Transverse colon (tissue), 4 donors: ENCODE measurements at regions of chr16 and their contacts with region 1.

Region 1: DNA sequence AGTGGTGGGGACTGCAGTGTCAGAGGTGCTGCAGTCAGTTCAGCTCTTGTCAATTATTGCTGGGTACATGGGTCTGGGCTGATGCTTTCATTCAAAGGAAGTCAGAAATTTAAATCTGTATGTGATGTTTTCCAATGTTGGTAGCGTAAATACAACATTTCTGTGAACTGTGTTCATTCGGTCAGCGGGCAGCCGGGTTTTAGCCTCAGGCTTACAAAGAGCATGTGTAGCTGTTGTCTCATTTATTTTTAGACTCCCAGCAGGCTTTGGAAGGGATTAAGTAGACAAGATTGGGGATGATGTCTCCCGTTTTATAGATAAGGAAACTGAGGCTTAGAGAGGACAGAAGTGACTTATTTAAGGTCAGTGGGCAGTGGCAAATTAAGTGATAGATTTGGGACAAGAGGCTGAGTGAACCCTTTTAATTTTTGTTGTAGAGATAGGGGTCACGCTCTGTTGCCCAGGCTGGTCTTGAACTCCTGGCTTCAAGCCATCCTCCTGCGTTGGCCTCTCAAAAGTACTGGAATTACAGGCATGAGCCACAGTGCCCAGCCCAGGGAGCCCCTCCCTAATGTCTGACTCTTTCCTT is 8.1 kb downstream of the AQP8 start:
- DNase-seq: no peak
- H3K4me3 ChIP-seq: no peak overlapping the region
- H3K27ac ChIP-seq: no peak overlapping the region
- H3K4me1 ChIP-seq: peaks cover 0 to 8% (median 2%) of the 10 kb centered on the region in 4 donors
- H3K27me3 ChIP-seq: no peaks in the 10 kb centered on the region
- CTCF ChIP-seq: no peak
- EP300 ChIP-seq: no peak
- POLR2A ChIP-seq: no peak

Region 2: DNA sequence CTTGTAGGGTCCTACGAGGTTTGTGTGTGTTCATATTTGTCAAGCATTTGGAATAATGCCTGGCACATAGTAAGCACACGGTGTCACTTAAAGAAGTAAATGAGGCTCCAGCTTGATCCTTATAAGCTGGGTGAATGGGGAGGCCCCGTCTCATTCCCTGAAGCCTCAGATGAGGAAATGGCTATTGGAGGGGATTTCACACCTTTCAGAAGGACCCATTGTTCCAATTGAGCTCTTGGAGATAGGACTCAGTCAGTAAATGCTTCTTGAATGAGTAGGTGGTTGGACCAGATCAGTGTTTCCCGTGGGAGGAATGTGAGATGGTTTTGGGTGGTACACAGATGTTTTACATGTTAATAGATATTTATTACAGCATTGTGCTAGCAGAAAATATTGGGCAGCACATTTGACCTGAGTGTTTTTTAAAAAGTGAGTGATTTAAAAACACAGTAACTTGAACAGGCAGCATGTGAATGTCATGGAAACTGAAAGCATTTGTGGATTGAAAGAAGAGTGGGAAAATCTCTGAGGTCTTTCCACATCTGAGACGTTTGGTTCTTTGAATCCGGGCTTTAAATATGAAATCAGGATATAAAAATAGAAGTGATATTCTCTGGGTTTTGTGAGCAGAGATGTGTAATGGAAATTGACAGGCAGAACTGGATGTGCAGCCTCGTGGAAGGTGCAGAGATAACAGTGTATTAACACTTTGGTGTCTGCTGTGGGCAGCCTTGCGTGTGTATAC is 173.2 kb before region 1 on chr16:
- in situ Hi-C with region 1: loop called in 2 of 4 experiments (anchors 10 to 25 kb)
- intact Hi-C with region 1: loop called (anchors 10 kb)
- DNase-seq: no peak
- H3K4me3 ChIP-seq: no peak overlapping the region
- H3K27ac ChIP-seq: peak overlapping the region; percentile 27 to 47 (median 36)
- H3K4me1 ChIP-seq: peaks cover 5 to 34% (median 19%) of the 10 kb centered on the region in 4 donors
- H3K27me3 ChIP-seq: no peaks in the 10 kb centered on the region
- CTCF ChIP-seq: no peak
- EP300 ChIP-seq: no peak
- POLR2A ChIP-seq: no peak

Region 3: DNA sequence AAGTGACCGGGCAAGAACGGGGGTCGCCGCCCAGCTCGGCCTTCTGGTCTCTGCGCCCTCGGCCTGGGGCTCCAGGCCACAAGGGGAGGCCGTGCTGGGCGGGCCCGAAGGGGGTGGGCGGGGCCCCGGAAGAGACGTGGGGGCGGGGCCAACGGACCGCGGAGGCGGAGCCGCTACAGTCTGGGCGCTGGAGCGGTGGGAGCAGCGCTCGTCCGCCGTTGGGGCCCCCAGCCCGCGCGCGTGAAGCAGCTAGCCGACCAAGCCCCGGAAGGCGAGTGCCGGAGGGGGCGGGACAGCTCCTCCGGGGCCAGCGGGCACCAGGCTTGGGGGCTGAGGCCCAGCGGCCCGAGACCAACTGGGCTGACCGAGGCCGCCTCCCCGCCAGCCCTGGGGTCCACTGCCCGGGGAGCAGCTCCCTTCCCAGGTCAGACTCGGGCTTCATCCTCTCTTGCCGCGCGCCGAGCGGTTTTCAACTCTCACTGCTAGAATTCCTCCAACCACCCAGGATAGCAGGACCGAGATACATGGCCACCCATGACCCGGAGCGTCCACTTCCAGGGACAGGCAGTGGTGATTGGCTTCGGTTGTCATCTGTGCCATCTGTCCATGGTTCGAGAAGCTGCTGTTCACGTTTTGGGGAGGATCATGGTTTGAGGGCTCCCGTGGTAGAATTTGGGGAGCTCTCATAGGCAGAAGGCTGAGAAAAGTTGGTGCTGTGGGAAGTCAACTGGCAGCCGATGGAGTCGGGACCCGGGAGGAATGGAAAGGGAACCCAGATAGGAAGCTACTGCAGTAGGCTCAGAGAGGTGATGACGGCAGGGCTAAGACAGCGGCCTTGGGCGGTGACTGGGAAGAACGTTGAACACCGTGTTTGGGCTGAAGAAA is 157.8 kb before region 1 on chr16:
- in situ Hi-C with region 1: loop called in 2 of 4 experiments (anchors 10 to 25 kb)
- intact Hi-C with region 1: no loop called
- DNase-seq: peak; percentile 88
- H3K4me3 ChIP-seq: peak overlapping the region; percentile 77 to 95 (median 87)
- H3K27ac ChIP-seq: peak overlapping the region; percentile 93 to 96 (median 95)
- H3K4me1 ChIP-seq: peaks cover 0 to 16% (median 11%) of the 10 kb centered on the region in 4 donors
- H3K27me3 ChIP-seq: no peaks in the 10 kb centered on the region
- CTCF ChIP-seq: peak in 1 of 5 experiments; percentile 9
- EP300 ChIP-seq: no peak
- POLR2A ChIP-seq: peak; percentile 87

Region 4: DNA sequence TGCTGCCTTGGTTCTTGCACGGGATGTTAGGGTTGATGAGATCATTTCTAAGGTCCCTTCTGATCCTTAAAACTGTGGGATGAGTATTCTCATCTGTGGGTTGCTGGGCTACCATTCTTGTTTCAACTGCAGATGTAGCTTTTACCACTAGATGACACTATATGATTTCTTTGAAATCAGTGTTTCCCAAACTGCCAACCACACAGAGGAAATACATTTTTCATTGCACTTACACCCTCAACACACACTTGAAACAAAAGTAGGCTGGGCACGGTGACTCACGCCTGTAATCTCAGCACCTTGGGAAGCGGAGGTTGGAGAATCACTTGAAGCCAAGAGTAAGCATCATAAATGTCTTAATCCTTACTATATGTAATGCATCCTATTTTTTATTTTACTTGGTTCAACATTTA is 98.0 kb before region 1 on chr16:
- in situ Hi-C with region 1: loop called in 1 of 4 experiments (anchors 10 kb)
- intact Hi-C with region 1: no loop called
- DNase-seq: peak; percentile 76
- H3K4me3 ChIP-seq: no peak overlapping the region
- H3K27ac ChIP-seq: peak overlapping the region; percentile 20 to 48 (median 39)
- H3K4me1 ChIP-seq: peaks cover 4 to 12% (median 11%) of the 10 kb centered on the region in 4 donors
- H3K27me3 ChIP-seq: no peaks in the 10 kb centered on the region
- CTCF ChIP-seq: peak; percentile 51 to 87 (median 66)
- EP300 ChIP-seq: no peak
- POLR2A ChIP-seq: no peak

Region 5: DNA sequence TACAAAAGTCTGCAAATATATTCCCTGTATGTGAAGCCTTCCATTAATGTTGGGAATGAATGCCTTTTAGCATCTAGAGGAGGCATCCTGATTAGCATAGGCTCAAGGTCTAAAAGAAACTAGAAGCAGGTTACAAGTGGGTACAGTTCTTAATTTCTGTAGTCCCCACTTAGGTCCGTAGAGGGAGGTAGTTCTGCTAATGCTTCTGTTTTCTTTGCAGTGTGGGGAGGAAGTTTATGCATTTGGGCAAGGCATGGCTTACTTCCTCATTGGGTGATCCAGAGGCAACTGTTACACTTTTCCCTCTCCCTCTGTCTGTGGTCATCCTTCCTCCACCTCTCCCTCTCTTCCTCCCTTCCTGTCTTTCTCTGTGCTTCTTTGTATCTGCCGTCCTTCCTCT is 141.3 kb after region 1 on chr16:
- in situ Hi-C with region 1: no loop called
- intact Hi-C with region 1: no loop called
- DNase-seq: no peak
- H3K4me3 ChIP-seq: no peak overlapping the region
- H3K27ac ChIP-seq: no peak overlapping the region
- H3K4me1 ChIP-seq: no peaks in the 10 kb centered on the region
- H3K27me3 ChIP-seq: no peaks in the 10 kb centered on the region
- CTCF ChIP-seq: no peak
- EP300 ChIP-seq: no peak
- POLR2A ChIP-seq: no peak